ENCODE measurements at regions of chr15 and their contacts with region 1.

Region 1: GRCh38 chr15:48112242-48112641 is 8.5 kb upstream of the SLC24A5 start:
- DNase-seq: no peak
- ATAC-seq: no peak
- H3K4me3 ChIP-seq: no peak overlapping the region
- H3K4me3 Mint-ChIP-seq: no peak overlapping the region
- H3K27ac ChIP-seq: no peak overlapping the region
- H3K27ac Mint-ChIP-seq: no peak overlapping the region
- H3K4me1 ChIP-seq: no peaks in the 10 kb centered on the region
- H3K4me1 Mint-ChIP-seq: no peaks in the 10 kb centered on the region
- H3K27me3 ChIP-seq: peaks cover 0 to 8% (median 5%) of the 10 kb centered on the region in 4 experiments
- H3K27me3 Mint-ChIP-seq: peaks cover 29% of the 10 kb centered on the region
- CTCF ChIP-seq: no peak

Region 2: GRCh38 chr15:48250640-48251076 is 138.4 kb after region 1 on chr15:
- CTCF ChIA-PET with region 1: no interaction called
- POLR2A ChIA-PET with region 1: no interaction called
- intact Hi-C with region 1: loop called (anchors 5 kb)
- DNase-seq: peak; percentile 27
- ATAC-seq: no peak
- H3K4me3 ChIP-seq: no peak overlapping the region
- H3K4me3 Mint-ChIP-seq: no peak overlapping the region
- H3K27ac ChIP-seq: no peak overlapping the region
- H3K27ac Mint-ChIP-seq: no peak overlapping the region
- H3K4me1 ChIP-seq: no peaks in the 10 kb centered on the region
- H3K4me1 Mint-ChIP-seq: no peaks in the 10 kb centered on the region
- H3K27me3 ChIP-seq: no peaks in the 10 kb centered on the region
- H3K27me3 Mint-ChIP-seq: peaks cover 15% of the 10 kb centered on the region
- CTCF ChIP-seq: peak; percentile 53

Measured in B cell (primary cell).